ENCODE measurements at regions of chr7 and their contacts with region 1.

Region 1: GRCh38 chr7:66740302-66740979 is at the start of gene RABGEF1:
- DNase-seq: peak; percentile 100
- H3K4me3 Mint-ChIP-seq: peak within 1 kb of the TSS; percentile 97
- H3K27ac Mint-ChIP-seq: peak within 1 kb of the TSS; percentile 97
- H3K4me1 Mint-ChIP-seq: peaks cover 26% of the 10 kb centered on the region
- H3K27me3 Mint-ChIP-seq: no peaks in the 10 kb centered on the region
- total RNA-seq, gene RABGEF1: 23.6 and 23.8 TPM in 2 replicates

Region 2: GRCh38 chr7:66591799-66592596 is 148.4 kb before region 1 on chr7:
- intact Hi-C with region 1: loop called (anchors 2 kb)
- DNase-seq: peak; percentile 97
- H3K4me3 Mint-ChIP-seq: peak overlapping the region; percentile 98
- H3K27ac Mint-ChIP-seq: peak overlapping the region; percentile 95
- H3K4me1 Mint-ChIP-seq: peaks cover 33% of the 10 kb centered on the region
- H3K27me3 Mint-ChIP-seq: no peaks in the 10 kb centered on the region

Region 3: DNA sequence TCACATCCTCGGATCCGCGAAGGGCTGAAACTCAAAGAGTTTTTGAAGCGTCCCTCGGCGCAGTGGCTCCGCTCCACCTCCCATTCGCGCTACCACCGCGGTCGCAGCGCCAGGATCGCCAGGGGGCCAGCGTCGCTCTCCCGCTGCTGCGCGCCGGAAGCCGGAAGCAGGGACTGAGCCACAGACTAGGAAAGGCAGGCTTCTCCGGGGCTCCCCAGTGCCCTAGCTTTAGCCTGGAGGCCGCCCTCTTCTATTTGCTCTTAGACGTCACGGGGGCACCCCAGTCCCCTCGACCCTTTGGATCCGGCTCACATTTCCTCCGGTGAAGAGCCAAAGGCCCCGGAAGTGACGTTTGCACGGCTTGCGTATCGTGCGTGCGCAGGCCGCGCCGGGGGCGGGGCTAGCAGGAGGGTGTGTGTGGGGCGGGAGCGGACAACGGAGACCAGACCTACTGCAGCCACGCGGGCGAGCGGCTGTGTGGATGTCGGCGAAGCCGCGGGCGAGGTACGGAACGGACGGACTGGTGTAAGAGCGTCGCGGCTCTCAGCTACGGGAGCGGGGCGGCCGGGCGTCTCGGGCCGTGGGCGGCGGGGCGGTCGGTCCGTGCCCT is 86.2 kb before region 1 on chr7:
- intact Hi-C with region 1: loop called (anchors 1 kb)
- DNase-seq: peak; percentile 100
- H3K4me3 Mint-ChIP-seq: peak overlapping the region; percentile 97
- H3K27ac Mint-ChIP-seq: peak overlapping the region; percentile 97
- H3K4me1 Mint-ChIP-seq: peaks cover 22% of the 10 kb centered on the region
- H3K27me3 Mint-ChIP-seq: no peaks in the 10 kb centered on the region

Region 4: GRCh38 chr7:66720561-66720960 is 19.9 kb before region 1 on chr7:
- intact Hi-C with region 1: no loop called
- DNase-seq: no peak
- H3K4me3 Mint-ChIP-seq: no peak overlapping the region
- H3K27ac Mint-ChIP-seq: no peak overlapping the region
- H3K4me1 Mint-ChIP-seq: no peaks in the 10 kb centered on the region
- H3K27me3 Mint-ChIP-seq: no peaks in the 10 kb centered on the region

Region 5: DNA sequence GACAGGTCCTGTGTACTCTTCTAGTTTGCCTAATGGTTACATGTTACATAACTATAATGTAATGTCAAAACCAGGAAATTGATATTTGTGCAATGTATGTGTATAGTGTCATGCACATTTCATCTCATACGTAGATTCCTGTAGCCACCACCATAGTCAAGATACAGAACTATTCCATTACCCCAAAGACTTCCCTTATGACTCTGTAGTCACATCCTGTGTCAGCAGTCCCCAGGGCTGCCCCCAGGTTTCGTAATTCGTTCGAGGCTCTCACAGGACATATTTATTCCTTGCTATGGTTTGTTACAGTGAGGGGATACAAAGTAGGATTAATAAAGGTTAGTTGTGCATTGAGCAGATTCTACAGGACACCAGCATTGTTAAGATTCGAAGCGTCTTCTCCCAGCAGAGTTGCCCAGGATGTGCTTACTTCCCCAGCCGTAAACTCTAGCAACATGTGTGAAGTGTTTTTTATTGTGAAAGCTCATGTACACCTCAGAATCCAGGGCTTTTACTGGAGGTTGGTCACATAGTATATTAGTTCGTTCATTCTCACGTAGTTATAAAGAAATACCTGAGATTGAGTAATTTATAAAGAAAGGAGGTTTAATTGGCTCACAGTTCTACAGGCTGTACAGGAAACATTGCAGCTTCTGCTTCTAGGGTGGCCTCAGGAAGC is 18.6 kb after region 1 on chr7:
- intact Hi-C with region 1: loop called (anchors 1 kb)
- DNase-seq: no peak
- H3K4me3 Mint-ChIP-seq: no peak overlapping the region
- H3K27ac Mint-ChIP-seq: peak overlapping the region; percentile 74
- H3K4me1 Mint-ChIP-seq: peaks cover 20% of the 10 kb centered on the region
- H3K27me3 Mint-ChIP-seq: no peaks in the 10 kb centered on the region

Region 6: DNA sequence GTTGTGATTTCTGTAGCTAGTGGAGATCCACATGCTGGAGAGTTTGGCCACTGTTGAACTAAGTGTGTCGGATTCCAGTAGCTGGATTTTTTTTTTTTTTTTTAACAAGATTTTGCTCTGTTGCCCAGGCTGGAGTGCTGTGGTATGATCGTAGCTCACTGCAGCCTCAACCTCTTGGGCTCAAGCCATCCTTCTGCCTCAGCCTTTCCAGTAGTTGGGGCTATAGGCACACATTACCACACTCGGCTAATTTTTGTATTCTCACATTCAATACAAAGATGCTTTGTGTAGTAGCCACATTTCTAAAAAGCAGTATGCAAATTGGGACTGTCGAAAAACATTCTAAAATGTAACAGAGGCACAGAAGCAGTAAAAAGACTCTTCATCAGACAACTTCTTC is 63.6 kb after region 1 on chr7:
- intact Hi-C with region 1: no loop called
- DNase-seq: no peak
- H3K4me3 Mint-ChIP-seq: no peak overlapping the region
- H3K27ac Mint-ChIP-seq: no peak overlapping the region
- H3K4me1 Mint-ChIP-seq: no peaks in the 10 kb centered on the region
- H3K27me3 Mint-ChIP-seq: no peaks in the 10 kb centered on the region

Region 7: DNA sequence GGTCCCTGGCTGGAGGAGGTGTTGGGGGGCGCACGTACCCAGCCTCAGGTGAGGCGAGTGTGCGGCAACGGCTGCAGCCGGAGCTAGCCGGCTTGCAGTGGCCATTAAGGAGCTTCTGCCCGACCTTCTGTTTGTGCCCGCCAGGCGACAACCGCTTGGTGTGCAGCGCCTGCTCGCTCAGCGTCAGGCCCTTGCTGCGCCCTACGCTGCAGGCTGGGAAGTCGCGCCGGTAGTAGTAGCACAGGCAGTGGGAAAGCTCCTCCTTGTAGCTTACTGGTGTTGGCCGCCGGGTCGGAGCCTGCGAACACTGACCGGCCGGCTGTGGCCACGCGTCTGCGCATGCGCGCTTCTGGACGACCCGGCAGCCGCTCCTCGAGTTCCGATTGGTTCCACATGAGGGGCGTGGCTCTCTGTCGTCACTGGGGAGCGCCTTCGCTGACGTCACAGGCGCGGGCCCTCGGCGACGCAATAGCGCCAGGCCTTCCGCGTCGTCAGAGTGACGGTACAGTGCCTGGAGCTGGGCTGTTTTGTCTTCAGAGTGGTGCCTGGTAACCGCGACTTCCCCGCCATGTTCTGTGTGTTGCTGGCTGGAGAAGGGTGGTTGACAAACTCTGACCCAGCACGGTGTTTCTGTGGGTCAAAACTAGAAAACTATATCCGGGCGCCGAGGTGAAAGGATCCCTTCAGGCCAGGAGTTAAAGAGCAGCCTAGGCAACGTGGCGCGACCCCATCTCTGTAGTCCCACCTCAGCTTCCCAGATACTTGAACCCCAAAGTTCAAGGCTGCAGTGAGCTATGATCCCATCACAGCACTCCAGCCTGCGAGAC is 104.3 kb after region 1 on chr7:
- intact Hi-C with region 1: loop called (anchors 2 kb)
- DNase-seq: peak; percentile 100
- H3K4me3 Mint-ChIP-seq: peak overlapping the region; percentile 99
- H3K27ac Mint-ChIP-seq: peak overlapping the region; percentile 97
- H3K4me1 Mint-ChIP-seq: peaks cover 22% of the 10 kb centered on the region
- H3K27me3 Mint-ChIP-seq: peaks cover 4% of the 10 kb centered on the region